ENCODE measurements at regions of chr7 and their contacts with region 1.

Region 1: DNA sequence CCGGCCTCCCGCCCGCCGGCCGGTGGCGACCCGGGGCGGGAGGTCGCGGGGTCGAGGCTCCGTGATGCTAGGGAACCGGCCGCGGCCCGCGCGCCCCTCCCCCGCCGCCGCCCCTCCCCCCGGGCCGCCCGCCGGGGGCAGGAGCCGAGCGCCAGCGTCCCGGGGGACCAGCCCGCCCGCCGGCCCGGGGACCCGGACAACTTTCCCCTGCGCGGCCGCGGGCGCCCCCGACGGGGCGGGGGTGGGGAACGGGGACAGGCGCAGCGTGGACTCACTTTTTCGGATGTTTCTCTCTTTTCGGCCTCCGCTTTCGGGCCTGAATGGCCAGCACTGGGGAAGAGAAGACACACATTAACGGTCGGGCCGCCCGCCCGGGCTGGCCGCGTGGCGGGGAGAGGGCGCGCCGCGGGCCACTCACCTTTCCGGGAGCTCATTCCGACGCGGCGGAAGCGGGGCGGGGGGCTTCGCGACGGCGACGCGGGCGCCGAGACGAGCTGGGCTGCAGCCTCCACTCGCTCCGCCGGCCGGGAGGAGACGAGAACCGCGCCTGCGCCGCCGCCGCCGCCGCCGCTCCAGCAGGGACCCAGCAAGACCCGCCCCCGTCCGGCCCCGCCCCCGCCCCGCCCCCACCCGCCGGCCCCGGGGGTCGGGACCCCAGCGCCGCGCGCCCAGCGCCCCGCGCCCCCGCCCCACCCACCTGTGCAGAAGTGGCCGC is at the start of gene SRPK2:
- DNase-seq: peak; percentile 39 to 86 (median 76)
- ATAC-seq: peak; percentile 80
- H3K4me3 ChIP-seq: peak within 1 kb of the TSS; percentile 65 to 85
- H3K4me3 Mint-ChIP-seq: peak within 1 kb of the TSS; percentile 95
- H3K27ac ChIP-seq: peak within 1 kb of the TSS; percentile 59
- H3K27ac Mint-ChIP-seq: peak within 1 kb of the TSS; percentile 95
- H3K4me1 ChIP-seq: peaks cover 14% of the 10 kb centered on the region
- H3K4me1 Mint-ChIP-seq: peaks cover 40% of the 10 kb centered on the region
- H3K27me3 ChIP-seq: no peaks in the 10 kb centered on the region
- H3K27me3 Mint-ChIP-seq: no peaks in the 10 kb centered on the region
- CTCF ChIP-seq: no peak
- total RNA-seq, gene SRPK2: 29.2 to 29.7 TPM

Region 2: GRCh38 chr7:105268511-105269392 is 119.8 kb before region 1 on chr7:
- CTCF ChIA-PET with region 1: interaction called, 3 read pairs
- POLR2A ChIA-PET with region 1: no interaction called
- intact Hi-C with region 1: loop called (anchors 2 to 5 kb)
- DNase-seq: peak in 2 of 9 experiments; percentile 44 to 64
- ATAC-seq: peak; percentile 68
- H3K4me3 ChIP-seq: peak overlapping the region; percentile 44 to 52
- H3K4me3 Mint-ChIP-seq: peak overlapping the region; percentile 88
- H3K27ac ChIP-seq: peak overlapping the region; percentile 28 to 67
- H3K27ac Mint-ChIP-seq: peak overlapping the region; percentile 91
- H3K4me1 ChIP-seq: peaks cover 31% of the 10 kb centered on the region
- H3K4me1 Mint-ChIP-seq: peaks cover 70% of the 10 kb centered on the region
- H3K27me3 ChIP-seq: no peaks in the 10 kb centered on the region
- H3K27me3 Mint-ChIP-seq: no peaks in the 10 kb centered on the region
- CTCF ChIP-seq: no peak

Region 3: DNA sequence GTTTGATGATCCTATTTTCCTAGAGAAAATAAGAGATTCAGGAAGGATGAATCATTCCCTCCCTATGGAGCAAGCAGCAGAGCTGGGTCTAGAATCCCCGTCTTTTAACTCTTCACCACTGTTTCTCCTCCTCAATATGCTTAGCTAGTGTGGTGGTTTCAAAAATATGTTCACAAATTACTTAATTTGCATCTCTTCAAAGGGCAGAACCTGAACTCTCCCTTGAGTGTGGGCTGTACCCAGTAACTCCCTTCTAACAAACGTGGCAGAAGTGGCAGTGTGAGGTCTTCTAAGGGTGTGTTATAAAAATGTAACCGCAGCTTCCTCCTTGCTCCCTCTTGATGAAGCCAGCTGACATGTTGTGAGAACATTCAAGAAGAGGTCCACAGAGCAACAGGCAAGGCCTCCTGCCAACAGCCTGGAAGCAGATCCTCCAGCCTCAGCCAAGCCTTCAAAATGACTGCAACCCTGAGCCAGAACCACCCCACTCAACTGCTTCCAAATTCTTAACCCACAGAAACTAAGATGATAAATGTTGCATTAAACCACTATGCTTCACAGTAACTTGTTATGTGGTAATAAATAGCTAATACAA is 36.4 kb before region 1 on chr7:
- CTCF ChIA-PET with region 1: no interaction called
- POLR2A ChIA-PET with region 1: interaction called, 11 read pairs
- intact Hi-C with region 1: loop called (anchors 1 to 2 kb)
- DNase-seq: peak; percentile 27 to 91 (median 56)
- ATAC-seq: peak; percentile 94
- H3K4me3 ChIP-seq: peak overlapping the region in 1 of 2 experiments; percentile 16
- H3K4me3 Mint-ChIP-seq: peak overlapping the region; percentile 63
- H3K27ac ChIP-seq: peak overlapping the region in 1 of 2 experiments; percentile 68
- H3K27ac Mint-ChIP-seq: peak overlapping the region; percentile 89
- H3K4me1 ChIP-seq: peaks cover 59% of the 10 kb centered on the region
- H3K4me1 Mint-ChIP-seq: peaks cover 66% of the 10 kb centered on the region
- H3K27me3 ChIP-seq: no peaks in the 10 kb centered on the region
- H3K27me3 Mint-ChIP-seq: no peaks in the 10 kb centered on the region
- CTCF ChIP-seq: no peak

Region 4: GRCh38 chr7:105522062-105522936 is 133.8 kb after region 1 on chr7 and contains the start of gene PUS7:
- CTCF ChIA-PET with region 1: no interaction called
- POLR2A ChIA-PET with region 1: no interaction called
- intact Hi-C with region 1: loop called in 1 of 2 experiments (anchors 5 kb)
- DNase-seq: peak; percentile 60 to 91 (median 79)
- ATAC-seq: peak; percentile 95
- H3K4me3 ChIP-seq: peak within 1 kb of the TSS; percentile 44 to 59
- H3K4me3 Mint-ChIP-seq: peak within 1 kb of the TSS; percentile 96
- H3K27ac ChIP-seq: peak within 1 kb of the TSS; percentile 65 to 70
- H3K27ac Mint-ChIP-seq: peak within 1 kb of the TSS; percentile 91
- H3K4me1 ChIP-seq: peaks cover 11% of the 10 kb centered on the region
- H3K4me1 Mint-ChIP-seq: peaks cover 14% of the 10 kb centered on the region
- H3K27me3 ChIP-seq: no peaks in the 10 kb centered on the region
- H3K27me3 Mint-ChIP-seq: no peaks in the 10 kb centered on the region
- CTCF ChIP-seq: no peak
- total RNA-seq, gene PUS7: 2.0 to 2.6 TPM

Measured in CD8-positive, alpha-beta T cell (primary cell).